ENCODE measurements at regions of chr2 and their contacts with region 1.

Region 1: GRCh38 chr2:69213201-69213600 is 173.8 kb downstream of the GFPT1 start:
- DNase-seq: no peak
- H3K4me3 ChIP-seq: no peak overlapping the region
- H3K27ac ChIP-seq: no peak overlapping the region
- H3K4me1 ChIP-seq: peaks cover 3% of the 10 kb centered on the region
- H3K27me3 ChIP-seq: no peaks in the 10 kb centered on the region
- CTCF ChIP-seq: no peak

Region 2: DNA sequence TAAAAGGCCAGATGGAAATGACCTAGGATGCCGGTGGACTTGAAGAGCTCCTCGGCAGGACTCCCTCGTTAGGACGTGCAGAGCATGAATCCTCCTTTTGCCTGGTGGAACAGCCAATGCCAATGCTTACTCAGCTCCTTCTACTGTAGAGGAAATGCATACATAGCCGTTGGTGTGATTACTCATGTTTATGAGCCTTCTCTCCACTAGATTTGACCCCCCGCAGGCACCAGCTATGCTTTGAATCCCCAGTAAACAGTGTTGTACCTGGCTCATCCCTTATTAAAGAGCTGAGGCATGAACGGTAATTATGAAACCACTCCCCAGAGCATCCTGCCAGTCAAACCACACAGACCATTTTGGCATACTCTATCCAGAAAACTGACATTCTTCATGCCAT is 27.4 kb before region 1 on chr2:
- CTCF ChIA-PET with region 1: no interaction called
- POLR2A ChIA-PET with region 1: interaction called, 10 read pairs
- intact Hi-C with region 1: no loop called
- DNase-seq: peak; percentile 70
- H3K4me3 ChIP-seq: no peak overlapping the region
- H3K27ac ChIP-seq: no peak overlapping the region
- H3K4me1 ChIP-seq: peaks cover 5% of the 10 kb centered on the region
- H3K27me3 ChIP-seq: no peaks in the 10 kb centered on the region
- CTCF ChIP-seq: no peak

Region 3: GRCh38 chr2:69255760-69256159 is 42.6 kb after region 1 on chr2:
- CTCF ChIA-PET with region 1: no interaction called
- POLR2A ChIA-PET with region 1: no interaction called
- intact Hi-C with region 1: no loop called
- DNase-seq: no peak
- H3K4me3 ChIP-seq: no peak overlapping the region
- H3K27ac ChIP-seq: no peak overlapping the region
- H3K4me1 ChIP-seq: peaks cover 21% of the 10 kb centered on the region
- H3K27me3 ChIP-seq: no peaks in the 10 kb centered on the region
- CTCF ChIP-seq: no peak

Measured in A673 (cell line).